Right lobe of liver (tissue), 6 donors: ENCODE measurements at regions of chr22 and their contacts with region 1.

Region 1: GRCh38 chr22:40024201-40025061 is 29.7 kb downstream of the FAM83F start:
- DNase-seq: peak; percentile 73 to 79 (median 76)
- ATAC-seq: peak; percentile 85 to 95 (median 92)
- H3K4me3 ChIP-seq: no peak overlapping the region
- H3K27ac ChIP-seq: no peak overlapping the region
- H3K4me1 ChIP-seq: no peaks in the 10 kb centered on the region
- H3K27me3 ChIP-seq: no peaks in the 10 kb centered on the region
- CTCF ChIP-seq: peak; percentile 80 to 93 (median 91)
- POLR2A ChIP-seq: no peak

Region 2: GRCh38 chr22:39534591-39535356 is 489.7 kb before region 1 on chr22:
- intact Hi-C with region 1: loop called (anchors 5 kb)
- DNase-seq: peak; percentile 82 to 85 (median 83)
- ATAC-seq: peak; percentile 40 to 49 (median 44)
- H3K4me3 ChIP-seq: no peak overlapping the region
- H3K27ac ChIP-seq: no peak overlapping the region
- H3K4me1 ChIP-seq: peaks cover 0 to 24% (median 9%) of the 10 kb centered on the region in 4 donors
- H3K27me3 ChIP-seq: no peaks in the 10 kb centered on the region
- CTCF ChIP-seq: peak; percentile 92 to 98 (median 95)
- POLR2A ChIP-seq: no peak

Region 3: GRCh38 chr22:39622881-39623367 is 401.5 kb before region 1 on chr22:
- intact Hi-C with region 1: loop called (anchors 5 kb)
- DNase-seq: peak in 2 of 3 donors; percentile 59 to 62
- ATAC-seq: peak; percentile 52 to 77 (median 70)
- H3K4me3 ChIP-seq: no peak overlapping the region
- H3K27ac ChIP-seq: no peak overlapping the region
- H3K4me1 ChIP-seq: no peaks in the 10 kb centered on the region
- H3K27me3 ChIP-seq: peaks cover 0 to 3% of the 10 kb centered on the region in 2 donors
- CTCF ChIP-seq: peak; percentile 40 to 61 (median 50)
- POLR2A ChIP-seq: no peak

Region 4: GRCh38 chr22:39932918-39933649 is 91.3 kb before region 1 on chr22:
- intact Hi-C with region 1: loop called in 1 of 2 experiments (anchors 10 kb)
- DNase-seq: peak in 2 of 3 donors; percentile 51 to 60
- ATAC-seq: peak; percentile 69 to 77 (median 74)
- H3K4me3 ChIP-seq: no peak overlapping the region
- H3K27ac ChIP-seq: no peak overlapping the region
- H3K4me1 ChIP-seq: no peaks in the 10 kb centered on the region
- H3K27me3 ChIP-seq: no peaks in the 10 kb centered on the region
- CTCF ChIP-seq: peak; percentile 70 to 82 (median 76)
- POLR2A ChIP-seq: no peak